ENCODE measurements at regions of chr11 and their contacts with region 1.

Region 1: GRCh38 chr11:65290448-65291165 is 24.1 kb upstream of the CDC42EP2 start:
- DNase-seq: no peak
- H3K4me3 ChIP-seq: no peak overlapping the region
- H3K27ac ChIP-seq: no peak overlapping the region
- H3K4me1 ChIP-seq: no peaks in the 10 kb centered on the region
- H3K27me3 ChIP-seq: no peaks in the 10 kb centered on the region
- CTCF ChIP-seq: no peak
- EP300 ChIP-seq: no peak
- POLR2A ChIP-seq: no peak
- RAD21 ChIP-seq: no peak

Region 2: DNA sequence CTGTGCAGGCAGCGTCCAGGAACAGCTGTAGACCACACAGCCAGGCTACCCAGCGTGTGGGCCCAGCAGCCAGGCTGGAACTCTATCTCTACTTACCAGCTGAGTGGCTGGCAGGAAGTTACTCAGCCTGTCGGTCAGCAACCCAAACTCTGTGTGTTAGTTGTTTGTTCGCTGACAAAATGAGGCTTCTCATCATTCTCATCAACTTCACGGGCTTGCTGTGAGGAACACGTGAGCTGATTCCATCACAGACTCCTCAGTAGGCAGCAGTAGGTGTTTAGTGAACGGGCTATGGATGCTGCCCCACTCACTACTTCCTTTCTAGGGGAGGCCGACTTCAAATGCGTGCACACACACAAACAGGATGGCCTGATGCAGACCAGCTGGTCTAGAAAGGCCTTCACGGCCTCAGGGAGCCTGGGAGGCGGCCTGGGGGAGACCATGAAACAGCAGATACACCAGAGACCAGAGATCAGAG is 121.4 kb before region 1 on chr11:
- CTCF ChIA-PET with region 1: no interaction called
- POLR2A ChIA-PET with region 1: no interaction called
- DNase-seq: no peak
- H3K4me3 ChIP-seq: no peak overlapping the region
- H3K27ac ChIP-seq: no peak overlapping the region
- H3K4me1 ChIP-seq: peaks cover 0 to 6% (median 1%) of the 10 kb centered on the region in 4 experiments; a peak in 2 of 7 replicates
- H3K27me3 ChIP-seq: no peaks in the 10 kb centered on the region
- CTCF ChIP-seq: no peak
- EP300 ChIP-seq: no peak
- POLR2A ChIP-seq: no peak
- RAD21 ChIP-seq: no peak

Region 3: GRCh38 chr11:65274735-65275682 is 15.6 kb before region 1 on chr11:
- CTCF ChIA-PET with region 1: interaction called, 1,179 read pairs
- POLR2A ChIA-PET with region 1: interaction called, 34 read pairs
- DNase-seq: peak in 1 of 2 experiments; percentile 29
- H3K4me3 ChIP-seq: no peak overlapping the region
- H3K27ac ChIP-seq: no peak overlapping the region
- H3K4me1 ChIP-seq: no peaks in the 10 kb centered on the region; a peak in 1 of 7 replicates
- H3K27me3 ChIP-seq: no peaks in the 10 kb centered on the region
- CTCF ChIP-seq: peak; percentile 65 to 95 (median 81)
- EP300 ChIP-seq: no peak
- POLR2A ChIP-seq: no peak
- RAD21 ChIP-seq: peak; percentile 87 to 94

Region 4: DNA sequence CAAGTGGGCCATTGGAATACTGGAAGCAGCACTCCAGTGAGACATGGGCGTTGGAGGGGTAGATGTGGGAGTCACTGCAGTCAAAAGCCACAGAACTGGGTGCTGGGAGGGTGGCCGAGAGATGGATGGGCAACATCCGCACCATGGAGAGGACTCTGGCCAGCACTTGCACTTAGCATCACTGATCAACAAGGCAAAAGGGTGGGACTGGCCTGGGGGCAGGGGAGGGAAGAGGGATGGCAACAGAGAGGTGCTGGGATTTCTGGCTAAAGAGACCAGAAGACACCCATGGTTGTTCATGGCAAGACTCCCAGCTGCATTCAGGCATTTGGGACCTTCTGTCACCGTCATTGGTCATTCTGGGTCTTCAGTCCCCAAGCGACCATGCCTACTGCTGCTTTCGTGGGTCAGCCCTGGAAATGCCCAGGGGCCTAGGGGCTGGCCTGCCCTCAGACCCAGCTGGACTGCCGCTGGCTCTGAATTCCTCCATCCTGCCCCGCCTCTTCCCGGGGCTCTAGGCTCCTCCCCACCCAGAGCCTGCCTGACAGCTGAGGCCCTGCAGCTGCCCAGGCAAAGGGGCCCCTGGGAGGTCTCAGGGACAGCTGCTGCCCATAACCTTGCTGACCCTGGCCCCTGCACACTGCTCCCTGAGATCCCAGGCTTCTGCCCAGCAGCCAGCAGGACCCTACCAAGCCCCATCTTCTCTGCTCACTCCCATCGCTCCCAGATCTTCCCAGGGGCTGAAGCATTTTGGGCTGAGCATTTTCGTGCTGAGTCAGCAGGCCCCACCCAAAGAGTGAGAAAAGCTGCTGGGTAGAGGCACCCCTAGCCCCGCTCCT is 11.1 kb after region 1 on chr11:
- CTCF ChIA-PET with region 1: interaction called, 1,179 read pairs
- POLR2A ChIA-PET with region 1: interaction called, 10 read pairs
- DNase-seq: peak in 1 of 2 experiments; percentile 76
- H3K4me3 ChIP-seq: 0 out of 8 replicates have a peak overlapping the region, but pooled peaks of 1 of the 4 experiments have one; percentile 7
- H3K27ac ChIP-seq: no peak overlapping the region; the same call in 1 of the 2 replicates
- H3K4me1 ChIP-seq: peaks cover 0 to 12% (median 9%) of the 10 kb centered on the region in 4 experiments; a peak in 6 of 7 replicates
- H3K27me3 ChIP-seq: peaks cover 0 to 2% (median 0%) of the 10 kb centered on the region in 4 experiments; a peak in 3 of 7 replicates
- CTCF ChIP-seq: no peak
- EP300 ChIP-seq: no peak
- POLR2A ChIP-seq: no peak; a peak in 1 of 3 replicates
- RAD21 ChIP-seq: no peak